A549 (cell line): ENCODE measurements at regions of chr22 and their contacts with region 1.

Region 1: DNA sequence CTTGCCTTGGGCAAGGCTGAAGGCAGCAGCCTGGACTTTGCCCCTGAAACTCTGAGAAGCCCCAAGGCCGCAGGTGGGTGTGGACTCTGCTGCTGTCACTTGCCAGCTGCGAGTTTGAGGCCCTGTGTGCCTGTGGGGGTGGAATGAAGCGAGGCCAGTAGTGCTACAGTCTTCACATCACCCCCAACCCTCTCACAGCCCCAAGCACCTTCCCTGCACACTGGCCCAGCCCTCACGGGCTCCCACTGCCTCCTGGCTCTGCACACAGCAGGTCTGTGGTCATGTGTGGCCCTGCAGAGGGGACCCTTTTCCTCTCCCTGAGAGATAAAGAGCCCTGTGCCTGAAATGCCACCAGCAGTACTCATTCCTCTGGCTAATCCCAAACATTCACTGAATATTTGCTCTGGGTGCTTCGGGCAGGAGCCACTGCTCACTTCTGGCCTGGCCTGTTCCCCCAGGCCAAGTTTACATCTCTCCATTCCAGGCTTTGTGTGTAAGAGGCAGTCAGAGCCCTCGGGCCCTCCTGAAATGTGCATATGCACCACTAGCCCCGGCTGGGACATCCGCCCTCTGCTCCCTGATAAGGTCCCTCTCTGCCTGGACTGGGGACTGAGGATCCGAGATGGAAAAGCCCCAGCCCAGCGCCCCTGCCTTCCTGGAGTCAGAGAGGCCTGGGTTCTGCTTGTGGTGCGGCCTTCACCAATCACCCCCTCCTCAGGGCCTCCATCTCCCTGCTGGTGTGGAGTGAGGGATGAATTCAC is 17.7 kb downstream of the MGAT3 start:
- DNase-seq: no peak
- ATAC-seq: no peak; a peak in 1 of 6 replicates
- H3K4me3 ChIP-seq: no peak overlapping the region
- H3K27ac ChIP-seq: no peak overlapping the region
- H3K4me1 ChIP-seq: peaks cover 16% of the 10 kb centered on the region; the same call in 1 of the 3 replicates
- CTCF ChIP-seq: no peak
- EP300 ChIP-seq: no peak
- POLR2A ChIP-seq: no peak
- RAD21 ChIP-seq: no peak

Region 2: DNA sequence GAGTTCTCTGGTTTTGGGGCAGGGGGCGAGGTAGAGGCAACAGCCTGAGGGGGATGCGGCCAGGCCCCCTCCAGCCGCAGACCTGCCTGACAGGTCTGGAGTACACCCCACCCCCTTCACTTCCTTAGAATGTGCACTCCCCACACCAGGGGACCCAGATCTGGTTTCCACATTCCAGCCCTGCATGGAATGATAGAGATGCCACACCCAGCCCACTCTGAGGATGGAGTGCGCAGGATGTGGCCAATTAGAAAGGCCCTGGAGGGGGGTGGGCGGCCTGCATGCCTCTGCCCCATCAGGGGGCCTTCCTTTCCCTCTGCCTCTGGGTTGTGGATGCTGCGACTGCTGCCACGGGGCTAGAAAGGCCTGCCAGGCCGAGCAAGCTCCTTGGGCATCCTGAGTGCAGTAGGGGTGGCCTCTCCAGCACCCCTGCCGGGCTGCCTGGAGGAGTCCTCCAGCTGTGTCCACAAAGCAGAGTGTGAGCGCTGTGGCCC is 45.9 kb before region 1 on chr22:
- CTCF ChIA-PET with region 1: no interaction called
- POLR2A ChIA-PET with region 1: no interaction called
- DNase-seq: no peak
- ATAC-seq: no peak; a peak in 1 of 6 replicates
- H3K4me3 ChIP-seq: no peak overlapping the region
- H3K27ac ChIP-seq: no peak overlapping the region
- H3K4me1 ChIP-seq: no peaks in the 10 kb centered on the region
- CTCF ChIP-seq: no peak
- EP300 ChIP-seq: no peak
- POLR2A ChIP-seq: no peak
- RAD21 ChIP-seq: no peak

Region 3: GRCh38 chr22:39490135-39490798 is 15.7 kb after region 1 on chr22:
- CTCF ChIA-PET with region 1: interaction called, 43 read pairs
- POLR2A ChIA-PET with region 1: no interaction called
- DNase-seq: peak; percentile 74 to 87
- ATAC-seq: peak; percentile 88 to 96
- H3K4me3 ChIP-seq: no peak overlapping the region
- H3K27ac ChIP-seq: no peak overlapping the region
- H3K4me1 ChIP-seq: no peaks in the 10 kb centered on the region
- CTCF ChIP-seq: no peak
- EP300 ChIP-seq: no peak
- POLR2A ChIP-seq: no peak
- RAD21 ChIP-seq: no peak